ENCODE measurements at regions of chr15 and their contacts with region 1.

Region 1: GRCh38 chr15:42474827-42475226 is 16.1 kb downstream of the ZNF106 start:
- DNase-seq: no peak
- CTCF ChIP-seq: no peak

Region 2: DNA sequence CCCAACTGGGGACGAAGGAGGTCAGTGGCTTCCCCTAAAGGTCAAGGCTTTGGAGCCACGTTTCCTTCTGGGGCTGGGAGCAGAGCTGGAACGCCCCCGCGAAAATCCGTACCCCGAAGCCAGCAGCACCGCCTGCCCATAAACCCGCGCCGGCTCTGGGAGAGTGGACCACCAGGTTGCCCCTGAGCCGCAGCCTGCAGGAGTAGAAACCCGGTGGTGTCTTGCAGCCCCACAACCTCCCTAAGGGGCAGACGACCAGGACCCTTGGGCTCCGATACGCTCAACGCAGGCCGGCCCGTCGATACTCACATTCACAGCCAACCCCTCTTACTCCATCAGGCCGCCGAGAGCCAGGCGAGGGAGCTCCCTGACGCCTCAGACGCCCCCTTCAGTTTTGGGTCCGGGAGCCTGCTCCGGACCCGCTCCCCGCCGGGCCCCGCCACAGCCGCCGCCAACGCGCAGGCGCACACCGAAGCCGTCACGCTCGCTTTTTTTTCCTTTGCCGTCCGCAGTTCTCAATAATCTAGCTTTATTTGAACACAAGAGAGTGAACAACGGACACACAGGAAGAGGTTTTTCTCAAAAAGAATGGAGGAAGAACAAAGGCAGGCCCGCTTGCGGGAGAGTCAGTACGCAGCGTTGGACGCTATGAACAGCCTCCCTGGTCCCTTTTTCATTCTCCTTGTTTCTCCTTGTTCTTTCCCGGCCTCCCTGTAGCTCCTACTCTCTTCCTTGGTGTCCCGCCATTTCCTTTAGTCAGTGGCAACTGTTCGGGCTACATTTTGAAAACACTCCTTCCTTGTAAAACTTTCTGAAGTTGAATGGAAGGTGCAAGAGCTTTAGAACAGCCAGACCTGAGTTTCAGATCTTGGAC is 16.1 kb after region 1 on chr15 and contains the start of gene ZNF106:
- CTCF ChIA-PET with region 1: interaction called, 35 read pairs
- POLR2A ChIA-PET with region 1: no interaction called
- DNase-seq: peak; percentile 94
- CTCF ChIP-seq: no peak

Region 3: GRCh38 chr15:43081283-43081682 is 606.5 kb after region 1 on chr15:
- CTCF ChIA-PET with region 1: no interaction called
- POLR2A ChIA-PET with region 1: no interaction called
- DNase-seq: no peak
- CTCF ChIP-seq: no peak

Measured in GM10248 (cell line).